ENCODE measurements at regions of chr1 and their contacts with region 1.

Region 1: DNA sequence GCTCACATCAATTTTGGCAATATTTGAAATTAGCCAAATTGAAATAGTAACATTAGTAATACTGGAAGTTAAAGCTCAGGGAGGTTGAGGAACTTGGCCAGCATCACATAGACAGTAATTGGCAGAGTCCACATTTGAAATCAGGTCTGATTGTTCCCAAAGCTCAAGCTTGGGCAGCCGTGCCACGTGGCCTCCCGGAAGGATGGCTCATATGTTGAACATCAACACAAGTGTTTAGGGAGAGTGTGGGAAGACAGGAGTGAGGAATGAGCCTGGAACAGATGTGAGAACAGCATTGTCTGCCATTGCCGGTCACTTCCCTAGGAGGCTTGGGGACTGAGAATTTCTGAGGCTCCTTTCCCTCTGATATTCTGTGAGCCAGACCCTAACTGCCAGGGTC is 40.2 kb upstream of the RBM15 start:
- DNase-seq: no peak
- ATAC-seq: no peak
- H3K4me3 ChIP-seq: no peak overlapping the region
- H3K27ac ChIP-seq: no peak overlapping the region
- H3K4me1 ChIP-seq: no peaks in the 10 kb centered on the region
- H3K27me3 ChIP-seq: no peaks in the 10 kb centered on the region
- CTCF ChIP-seq: no peak

Region 2: DNA sequence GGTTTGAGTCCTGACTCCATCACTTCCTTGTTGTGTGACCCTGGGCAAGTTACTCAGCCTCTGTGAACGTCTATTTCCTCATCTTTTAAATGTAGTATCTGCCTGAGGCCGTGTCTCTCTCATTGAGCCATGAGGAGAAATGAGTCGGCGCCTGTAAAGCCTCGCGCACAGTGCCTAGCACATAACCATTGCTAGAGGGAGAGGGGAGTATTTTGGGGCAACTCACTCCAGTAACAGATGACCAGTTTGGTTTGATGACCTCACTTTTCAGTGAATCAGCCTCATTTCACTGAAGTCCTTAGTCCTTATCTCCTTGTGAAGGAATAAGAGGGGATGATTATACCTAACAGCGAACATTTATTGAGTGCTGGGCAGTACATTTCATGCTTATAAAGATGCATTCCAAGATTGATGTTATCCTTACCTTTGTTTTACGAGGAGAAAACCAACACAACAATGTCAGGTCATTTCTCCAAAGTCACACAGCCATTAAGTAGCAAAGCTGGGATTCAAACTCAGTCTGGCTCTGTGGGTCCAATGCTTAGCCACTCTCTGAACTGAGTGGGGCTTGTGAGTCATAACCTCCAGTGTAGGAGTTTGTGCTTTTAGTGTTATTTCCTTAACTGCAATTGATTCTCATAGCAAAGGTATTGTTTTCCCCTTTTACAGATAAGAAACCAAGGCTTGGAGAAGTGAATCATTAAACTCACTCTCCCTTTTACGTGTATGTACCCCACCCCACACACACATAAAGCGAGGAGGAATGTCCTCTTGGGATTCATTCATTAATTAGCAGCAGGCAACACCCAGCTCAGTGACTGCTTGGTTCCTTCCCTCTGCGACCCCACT is 62.9 kb before region 1 on chr1:
- intact Hi-C with region 1: loop called in 1 of 10 experiments (anchors 5 kb)
- DNase-seq: no peak
- ATAC-seq: peak in 2 of 8 donors; percentile 21 to 60
- H3K4me3 ChIP-seq: no peak overlapping the region
- H3K27ac ChIP-seq: peak overlapping the region in 7 of 10 donors; percentile 36 to 85 (median 69)
- H3K4me1 ChIP-seq: peaks cover 0 to 56% (median 32%) of the 10 kb centered on the region in 9 donors
- H3K27me3 ChIP-seq: no peaks in the 10 kb centered on the region
- CTCF ChIP-seq: no peak